ENCODE measurements at regions of chr10 and their contacts with region 1.

Region 1: GRCh38 chr10:50636618-50637579 is 13.1 kb upstream of the SGMS1 start:
- DNase-seq: peak; percentile 60
- H3K4me3 Mint-ChIP-seq: peak overlapping the region; percentile 56
- H3K27ac Mint-ChIP-seq: peak overlapping the region; percentile 85
- H3K4me1 Mint-ChIP-seq: peaks cover 43% of the 10 kb centered on the region
- H3K27me3 Mint-ChIP-seq: peaks cover 31% of the 10 kb centered on the region

Region 2: GRCh38 chr10:50456719-50457118 is 180.2 kb before region 1 on chr10:
- CTCF ChIA-PET with region 1: no interaction called
- POLR2A ChIA-PET with region 1: no interaction called
- DNase-seq: no peak
- H3K4me3 Mint-ChIP-seq: no peak overlapping the region
- H3K27ac Mint-ChIP-seq: no peak overlapping the region
- H3K4me1 Mint-ChIP-seq: no peaks in the 10 kb centered on the region
- H3K27me3 Mint-ChIP-seq: no peaks in the 10 kb centered on the region

Region 3: DNA sequence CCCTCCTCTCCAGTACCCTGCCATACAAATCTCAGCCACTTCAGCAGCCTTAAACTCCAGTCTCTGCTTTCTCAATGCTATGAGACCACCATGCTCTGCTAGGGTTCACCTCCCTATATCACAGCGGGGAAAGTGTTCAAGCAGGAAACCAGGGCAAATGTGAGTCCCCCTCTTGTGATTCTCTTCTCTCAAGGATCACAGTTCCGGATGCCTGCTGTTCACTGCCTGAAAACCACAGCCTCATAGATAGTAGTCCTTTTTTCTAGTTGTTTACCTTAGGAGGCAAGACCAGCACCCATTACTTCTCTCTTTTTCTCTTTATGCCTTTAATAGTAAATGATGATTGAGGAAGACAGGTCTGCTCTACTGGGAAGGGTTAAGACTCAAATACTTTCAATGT is 114.0 kb before region 1 on chr10:
- CTCF ChIA-PET with region 1: no interaction called
- POLR2A ChIA-PET with region 1: no interaction called
- DNase-seq: no peak
- H3K4me3 Mint-ChIP-seq: no peak overlapping the region
- H3K27ac Mint-ChIP-seq: no peak overlapping the region
- H3K4me1 Mint-ChIP-seq: peaks cover 8% of the 10 kb centered on the region
- H3K27me3 Mint-ChIP-seq: no peaks in the 10 kb centered on the region

Region 4: GRCh38 chr10:50624866-50625692 is 11.8 kb before region 1 on chr10:
- CTCF ChIA-PET with region 1: interaction called, 13 read pairs
- POLR2A ChIA-PET with region 1: no interaction called
- DNase-seq: peak; percentile 62
- H3K4me3 Mint-ChIP-seq: peak overlapping the region; percentile 92
- H3K27ac Mint-ChIP-seq: peak overlapping the region; percentile 98
- H3K4me1 Mint-ChIP-seq: peaks cover 41% of the 10 kb centered on the region
- H3K27me3 Mint-ChIP-seq: peaks cover 6% of the 10 kb centered on the region

Region 5: DNA sequence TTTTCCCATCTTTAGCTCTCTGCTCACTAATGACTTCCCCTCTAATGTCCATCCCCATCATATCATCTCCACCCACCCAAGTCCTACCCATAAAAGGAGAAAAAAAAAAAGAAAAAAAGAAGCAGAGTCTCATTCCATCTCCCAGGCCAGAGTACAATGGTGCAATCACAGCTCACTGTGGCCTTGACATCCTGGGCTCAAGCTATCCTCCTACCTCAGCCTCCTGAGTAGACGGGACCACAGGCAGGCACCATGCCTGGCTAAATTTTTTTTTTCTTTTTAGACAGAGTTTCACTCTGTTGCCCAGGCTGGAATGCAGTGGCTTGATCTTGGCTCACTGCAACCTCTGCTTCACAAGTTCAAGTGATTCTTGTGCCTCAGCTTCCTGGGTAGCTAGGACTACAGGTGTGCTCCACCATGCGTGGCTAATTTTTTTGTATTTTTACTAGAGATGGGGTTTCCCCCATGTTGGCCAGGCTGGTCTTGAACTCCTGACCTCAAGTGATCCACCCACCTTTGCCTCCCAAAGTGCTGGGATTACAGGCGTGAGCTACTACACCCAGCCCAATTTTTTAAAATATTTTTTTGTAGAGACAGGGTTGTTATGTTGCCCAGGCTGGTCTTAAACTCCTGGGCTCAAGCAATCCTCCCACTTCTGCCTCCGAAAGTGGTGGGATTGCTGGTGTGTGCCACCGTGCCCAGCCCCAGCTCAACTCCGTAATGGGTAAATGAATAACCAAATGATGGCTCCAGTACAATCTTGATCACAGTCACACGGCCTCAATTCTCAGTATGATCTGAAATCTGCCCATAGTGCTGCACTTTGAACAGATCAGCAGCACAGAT is 11.4 kb after region 1 on chr10:
- CTCF ChIA-PET with region 1: interaction called, 22 read pairs
- POLR2A ChIA-PET with region 1: no interaction called
- DNase-seq: no peak
- H3K4me3 Mint-ChIP-seq: no peak overlapping the region
- H3K27ac Mint-ChIP-seq: no peak overlapping the region
- H3K4me1 Mint-ChIP-seq: peaks cover 5% of the 10 kb centered on the region
- H3K27me3 Mint-ChIP-seq: no peaks in the 10 kb centered on the region

Region 6: GRCh38 chr10:50653758-50654157 is 16.9 kb after region 1 on chr10:
- CTCF ChIA-PET with region 1: interaction called, 22 read pairs
- POLR2A ChIA-PET with region 1: no interaction called
- DNase-seq: no peak
- H3K4me3 Mint-ChIP-seq: no peak overlapping the region
- H3K27ac Mint-ChIP-seq: no peak overlapping the region
- H3K4me1 Mint-ChIP-seq: peaks cover 16% of the 10 kb centered on the region
- H3K27me3 Mint-ChIP-seq: no peaks in the 10 kb centered on the region

Measured in activated CD4-positive, alpha-beta T cell treated with anti-CD3 and anti-CD28 coated beads, Interleukin-2, amount 10 ng/mL, durations not matched to agents 7 days and 5 days (primary cell).